ENCODE measurements at regions of chr2 and their contacts with region 1.

Region 1: GRCh38 chr2:207983641-207984042 is 41.7 kb downstream of the PLEKHM3 start:
- DNase-seq: no peak
- H3K4me3 ChIP-seq: no peak overlapping the region
- H3K27ac ChIP-seq: no peak overlapping the region
- H3K4me1 ChIP-seq: no peaks in the 10 kb centered on the region
- H3K27me3 ChIP-seq: no peaks in the 10 kb centered on the region
- CTCF ChIP-seq: no peak

Region 2: GRCh38 chr2:208013285-208014178 is 29.9 kb after region 1 on chr2:
- CTCF ChIA-PET with region 1: no interaction called
- POLR2A ChIA-PET with region 1: interaction called, 10 read pairs
- intact Hi-C with region 1: no loop called
- DNase-seq: peak; percentile 31 to 91
- H3K4me3 ChIP-seq: no peak overlapping the region
- H3K27ac ChIP-seq: peak overlapping the region; percentile 83
- H3K4me1 ChIP-seq: peaks cover 45% of the 10 kb centered on the region
- H3K27me3 ChIP-seq: no peaks in the 10 kb centered on the region
- CTCF ChIP-seq: no peak